ENCODE measurements at regions of chr15 and their contacts with region 1.

Region 1: DNA sequence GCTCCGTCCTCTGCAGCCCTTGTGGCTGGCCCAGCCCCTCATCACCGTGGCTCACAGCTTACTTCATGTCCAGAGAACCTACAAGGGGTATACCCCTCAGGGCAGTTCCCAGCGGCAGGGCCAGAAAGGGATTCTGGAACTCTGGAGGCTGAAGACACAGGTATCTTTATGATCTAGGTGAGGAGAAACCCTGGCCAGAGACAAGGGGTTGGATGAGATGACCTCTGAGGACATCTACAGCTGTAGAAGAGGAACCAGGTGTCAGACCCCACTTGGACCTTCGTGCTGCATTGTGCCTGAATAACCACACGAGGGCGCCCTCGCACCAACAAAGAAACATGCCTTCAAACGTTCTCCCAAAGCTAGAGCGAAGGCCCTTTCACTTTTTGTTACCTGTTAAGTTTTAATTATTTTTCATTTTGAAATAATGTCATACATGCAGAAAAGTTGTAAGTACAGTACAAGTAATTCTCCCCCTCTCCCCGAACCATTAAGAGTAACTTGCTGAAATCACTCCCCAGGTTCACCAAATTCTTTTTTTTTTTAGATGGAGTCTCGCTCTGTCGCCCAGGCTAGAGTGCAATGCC is 118.7 kb upstream of the SMAD3 start:
- DNase-seq: peak; percentile 60 to 79 (median 63)
- ATAC-seq: peak; percentile 53 to 83 (median 74)
- H3K4me3 ChIP-seq: peak overlapping the region in 2 of 12 donors; percentile 13 to 28
- H3K27ac ChIP-seq: no peak overlapping the region
- H3K4me1 ChIP-seq: peaks cover 0 to 12% (median 0%) of the 10 kb centered on the region in 12 donors
- H3K27me3 ChIP-seq: no peaks in the 10 kb centered on the region
- CTCF ChIP-seq: peak; percentile 87 to 97 (median 94)
- POLR2A ChIP-seq: no peak

Region 2: DNA sequence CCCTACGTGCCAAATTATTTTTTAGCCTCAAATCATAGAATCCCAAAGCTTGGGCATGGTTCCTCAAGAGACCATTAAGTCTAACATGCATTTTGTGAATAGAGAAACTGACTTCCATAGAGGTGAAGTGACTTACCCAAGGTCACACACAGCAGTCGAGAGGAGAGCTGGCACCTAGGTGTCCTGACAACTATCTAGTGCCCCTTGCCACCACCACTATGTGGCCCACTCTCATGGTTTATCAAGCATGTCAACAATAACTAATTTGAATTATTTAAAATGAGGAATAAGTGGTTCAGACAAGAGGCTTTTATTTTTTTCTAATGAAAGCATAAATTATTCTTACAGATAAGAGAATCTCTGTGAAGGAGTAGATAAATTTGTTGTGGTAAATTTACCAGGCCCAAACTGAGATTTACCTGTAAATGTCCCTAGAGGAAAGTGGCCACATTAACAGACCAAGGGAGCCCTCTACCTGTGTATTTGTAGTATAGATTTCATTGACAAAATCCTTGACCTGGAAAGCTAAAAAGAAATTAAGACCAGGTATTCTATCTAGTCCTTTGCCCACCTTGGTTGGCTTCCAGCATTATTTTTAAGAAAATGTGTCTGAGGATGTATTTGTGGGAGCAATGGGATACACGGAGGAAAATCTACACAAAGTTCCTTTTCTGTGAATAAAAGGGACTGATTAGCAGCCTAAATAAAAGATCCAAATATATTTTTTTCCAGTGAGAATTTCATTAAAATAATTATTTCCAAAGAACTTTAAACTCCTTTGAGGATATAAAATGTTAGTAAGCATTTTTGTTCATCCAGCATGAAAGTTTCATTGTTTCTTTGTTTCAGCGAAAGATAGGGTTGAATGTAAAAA is 357.1 kb after region 1 on chr15:
- intact Hi-C with region 1: loop called (anchors 1 to 5 kb)
- DNase-seq: no peak
- ATAC-seq: peak in 1 of 4 donors; percentile 65
- H3K4me3 ChIP-seq: no peak overlapping the region
- H3K27ac ChIP-seq: no peak overlapping the region
- H3K4me1 ChIP-seq: no peaks in the 10 kb centered on the region
- H3K27me3 ChIP-seq: no peaks in the 10 kb centered on the region
- CTCF ChIP-seq: peak in 11 of 12 donors; percentile 37 to 68 (median 53)
- POLR2A ChIP-seq: no peak

Region 3: GRCh38 chr15:67433495-67434099 is 486.9 kb after region 1 on chr15:
- intact Hi-C with region 1: loop called (anchors 1 to 5 kb)
- DNase-seq: peak in 4 of 5 donors; percentile 22 to 31 (median 27)
- ATAC-seq: peak in 3 of 4 donors; percentile 47 to 71 (median 61)
- H3K4me3 ChIP-seq: no peak overlapping the region
- H3K27ac ChIP-seq: no peak overlapping the region
- H3K4me1 ChIP-seq: peaks cover 0 to 5% (median 0%) of the 10 kb centered on the region in 12 donors
- H3K27me3 ChIP-seq: no peaks in the 10 kb centered on the region
- CTCF ChIP-seq: peak; percentile 54 to 80 (median 68)
- POLR2A ChIP-seq: no peak